ENCODE measurements at regions of chrX and their contacts with region 1.

Region 1: DNA sequence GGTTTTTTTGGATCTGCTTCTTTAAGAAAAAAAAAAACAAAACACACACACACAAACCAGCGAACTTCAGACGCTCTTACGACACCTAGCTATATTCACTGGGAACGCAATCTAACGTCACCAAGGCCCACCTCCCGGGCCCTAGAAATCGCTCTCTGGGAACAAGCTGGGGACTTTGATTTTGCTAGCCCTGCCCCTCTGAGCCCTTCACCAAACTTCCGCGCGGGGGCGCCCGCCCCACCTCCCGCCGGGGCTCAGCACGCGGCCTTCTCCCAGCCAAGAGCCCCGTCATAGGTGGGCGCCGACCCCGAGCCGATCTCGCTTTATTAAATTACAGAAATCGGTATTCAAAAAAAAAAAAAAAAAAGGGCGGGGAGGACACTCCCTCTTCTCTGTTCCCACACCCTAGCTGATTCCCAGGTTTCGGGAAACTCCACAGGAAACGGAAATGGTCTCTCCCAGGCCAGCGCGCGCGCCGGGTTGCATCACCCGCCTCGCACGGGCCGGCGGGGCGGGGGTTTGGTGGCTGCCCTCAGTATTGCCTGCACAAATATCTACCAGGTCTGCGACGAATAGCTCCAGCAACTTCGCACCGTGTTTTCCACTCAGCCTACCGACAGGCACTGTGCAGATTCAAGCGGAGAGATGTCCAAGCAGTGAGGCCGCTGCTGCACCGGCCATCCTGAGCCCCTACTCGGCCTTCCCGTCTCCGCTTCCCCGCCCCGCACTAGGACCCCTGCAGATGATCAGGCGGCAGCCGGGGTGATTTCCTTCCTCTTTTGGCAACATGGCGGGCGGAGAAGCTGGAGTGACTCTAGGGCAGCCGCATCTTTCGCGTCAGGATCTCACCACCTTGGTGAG is at the start of gene EIF2S3:
- DNase-seq: peak; percentile 96
- H3K4me3 ChIP-seq: no peak within 1 kb of the TSS
- H3K27ac ChIP-seq: no peak within 1 kb of the TSS
- H3K4me1 ChIP-seq: no peaks in the 10 kb centered on the region
- H3K27me3 ChIP-seq: no peaks in the 10 kb centered on the region
- CTCF ChIP-seq: peak; percentile 45 to 65
- total RNA-seq, gene EIF2S3: 299 to 364 TPM

Region 2: GRCh38 chrX:23694606-23695005 is 359.8 kb before region 1 on chrX:
- CTCF ChIA-PET with region 1: no interaction called
- dilution Hi-C with region 1: no loop called
- in situ Hi-C with region 1: loop called in 1 of 2 experiments (anchors 25 kb)
- intact Hi-C with region 1: loop called (anchors 5 kb)
- DNase-seq: peak; percentile 30
- H3K4me3 ChIP-seq: no peak overlapping the region
- H3K27ac ChIP-seq: no peak overlapping the region
- H3K4me1 ChIP-seq: no peaks in the 10 kb centered on the region
- H3K27me3 ChIP-seq: no peaks in the 10 kb centered on the region
- CTCF ChIP-seq: peak; percentile 53 to 61

Region 3: GRCh38 chrX:23742697-23743622 is 311.5 kb before region 1 on chrX and contains the start of gene ACOT9:
- CTCF ChIA-PET with region 1: interaction called, 8 read pairs
- dilution Hi-C with region 1: no loop called
- in situ Hi-C with region 1: loop called in 1 of 2 experiments (anchors 25 kb)
- intact Hi-C with region 1: no loop called
- DNase-seq: peak; percentile 81
- H3K4me3 ChIP-seq: peak within 1 kb of the TSS; percentile 56 to 88 (median 72)
- H3K27ac ChIP-seq: peak within 1 kb of the TSS; percentile 94
- H3K4me1 ChIP-seq: no peaks in the 10 kb centered on the region
- H3K27me3 ChIP-seq: no peaks in the 10 kb centered on the region
- CTCF ChIP-seq: no peak
- total RNA-seq, gene ACOT9: 57.8 to 74.1 TPM

Region 4: DNA sequence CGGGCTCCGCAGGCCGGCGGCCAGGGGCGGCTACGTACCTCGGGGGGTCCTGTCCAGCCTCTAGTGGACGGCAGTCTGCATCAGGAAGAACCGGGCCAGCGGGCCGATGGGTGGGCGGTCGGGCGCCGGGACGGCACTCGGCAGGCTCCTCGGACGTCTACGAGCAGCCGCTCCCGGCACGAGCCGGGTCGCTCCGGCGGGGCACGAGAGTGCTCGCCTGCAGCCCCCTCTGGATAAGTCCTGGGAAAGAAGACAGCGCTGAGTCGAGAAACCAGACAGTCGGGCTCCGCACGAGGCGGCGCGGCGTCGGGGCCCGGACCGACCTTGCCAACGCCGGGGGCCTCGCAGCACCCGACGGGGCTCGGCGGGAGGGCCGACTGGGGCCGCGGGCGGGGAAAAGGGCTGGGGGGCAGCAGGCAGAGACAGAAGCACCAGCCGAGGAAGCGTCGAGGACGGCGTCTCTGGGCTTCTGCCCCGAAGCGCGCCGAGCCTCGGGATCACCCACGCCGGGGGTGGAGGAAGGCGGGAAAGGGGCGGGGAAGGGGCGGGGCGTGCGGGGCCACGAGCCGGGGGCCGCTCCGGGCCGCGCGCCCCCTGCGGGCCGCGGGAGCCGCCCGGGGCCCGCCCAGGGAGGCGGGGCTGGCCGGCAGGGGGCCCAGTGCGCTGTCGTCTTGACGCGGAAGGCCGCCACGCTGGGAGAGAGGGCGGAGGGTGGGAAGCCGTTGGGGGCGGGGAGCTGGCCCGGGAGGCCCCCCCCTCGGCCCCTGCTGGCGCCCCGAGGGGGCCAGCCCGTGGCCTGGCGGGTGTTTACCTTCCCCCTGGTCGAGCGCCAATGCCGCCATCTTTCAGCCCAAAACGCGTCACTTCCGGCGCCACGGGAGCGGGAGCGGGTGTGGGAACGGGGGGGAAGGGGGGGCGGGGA is 29.3 kb before region 1 on chrX:
- CTCF ChIA-PET with region 1: interaction called, 17 read pairs
- dilution Hi-C with region 1: no loop called
- in situ Hi-C with region 1: no loop called
- intact Hi-C with region 1: loop called (anchors 1 kb)
- DNase-seq: peak; percentile 76
- H3K4me3 ChIP-seq: peak overlapping the region; percentile 76 to 87 (median 78)
- H3K27ac ChIP-seq: peak overlapping the region; percentile 75
- H3K4me1 ChIP-seq: no peaks in the 10 kb centered on the region
- H3K27me3 ChIP-seq: no peaks in the 10 kb centered on the region
- CTCF ChIP-seq: no peak

Region 5: GRCh38 chrX:24150051-24150790 is 95.8 kb after region 1 on chrX:
- CTCF ChIA-PET with region 1: no interaction called
- dilution Hi-C with region 1: no loop called
- in situ Hi-C with region 1: no loop called
- intact Hi-C with region 1: loop called (anchors 1 kb)
- DNase-seq: peak; percentile 86
- H3K4me3 ChIP-seq: peak overlapping the region; percentile 86 to 98 (median 97)
- H3K27ac ChIP-seq: peak overlapping the region; percentile 82
- H3K4me1 ChIP-seq: peaks cover 49% of the 10 kb centered on the region
- H3K27me3 ChIP-seq: no peaks in the 10 kb centered on the region
- CTCF ChIP-seq: peak; percentile 8 to 39

Measured in mammary epithelial cell (primary cell).